ENCODE measurements at regions of chr10 and their contacts with region 1.

Region 1: DNA sequence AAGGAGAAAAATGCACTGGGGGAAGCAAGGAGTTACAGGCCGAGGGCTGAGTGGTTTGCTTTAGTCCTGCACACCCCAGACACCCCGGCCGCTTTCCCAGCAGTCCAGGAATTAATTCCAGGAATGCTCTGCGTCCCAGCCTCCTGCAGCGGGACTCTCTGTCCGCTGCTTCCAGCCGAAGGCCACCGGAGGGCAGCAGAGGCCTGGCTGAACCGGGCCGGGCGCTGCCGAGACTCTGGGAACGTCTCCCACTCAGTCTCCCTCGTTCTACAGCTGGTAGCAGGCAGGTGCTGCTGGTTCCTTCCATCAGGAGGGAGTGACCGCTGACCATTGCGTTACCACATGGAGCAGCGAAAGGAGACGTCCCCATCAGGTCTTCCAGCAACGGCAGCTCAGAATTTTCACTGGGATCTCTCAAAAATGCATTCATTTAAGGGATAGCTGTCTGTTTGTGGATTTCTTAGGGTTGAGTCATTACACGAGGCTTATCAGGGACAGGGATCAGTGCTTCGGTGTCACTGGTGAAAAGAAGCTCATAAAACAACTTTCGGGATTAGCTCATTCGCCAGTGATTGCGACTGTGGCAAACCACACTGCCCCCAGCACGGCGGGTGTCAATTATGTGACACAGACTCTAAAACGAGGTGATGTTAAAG is 24.9 kb upstream of the PITRM1 start:
- DNase-seq: peak; percentile 60 to 85
- H3K4me3 ChIP-seq: no peak overlapping the region
- H3K27ac ChIP-seq: no peak overlapping the region
- H3K4me1 ChIP-seq: no peaks in the 10 kb centered on the region; a peak in 2 of 7 replicates
- H3K27me3 ChIP-seq: peaks cover 0 to 3% (median under 1%) of the 10 kb centered on the region in 4 experiments; a peak in 1 of 7 replicates
- CTCF ChIP-seq: peak; percentile 81 to 92 (median 83)
- EP300 ChIP-seq: no peak
- POLR2A ChIP-seq: no peak
- RAD21 ChIP-seq: peak; percentile 95 to 97

Region 2: DNA sequence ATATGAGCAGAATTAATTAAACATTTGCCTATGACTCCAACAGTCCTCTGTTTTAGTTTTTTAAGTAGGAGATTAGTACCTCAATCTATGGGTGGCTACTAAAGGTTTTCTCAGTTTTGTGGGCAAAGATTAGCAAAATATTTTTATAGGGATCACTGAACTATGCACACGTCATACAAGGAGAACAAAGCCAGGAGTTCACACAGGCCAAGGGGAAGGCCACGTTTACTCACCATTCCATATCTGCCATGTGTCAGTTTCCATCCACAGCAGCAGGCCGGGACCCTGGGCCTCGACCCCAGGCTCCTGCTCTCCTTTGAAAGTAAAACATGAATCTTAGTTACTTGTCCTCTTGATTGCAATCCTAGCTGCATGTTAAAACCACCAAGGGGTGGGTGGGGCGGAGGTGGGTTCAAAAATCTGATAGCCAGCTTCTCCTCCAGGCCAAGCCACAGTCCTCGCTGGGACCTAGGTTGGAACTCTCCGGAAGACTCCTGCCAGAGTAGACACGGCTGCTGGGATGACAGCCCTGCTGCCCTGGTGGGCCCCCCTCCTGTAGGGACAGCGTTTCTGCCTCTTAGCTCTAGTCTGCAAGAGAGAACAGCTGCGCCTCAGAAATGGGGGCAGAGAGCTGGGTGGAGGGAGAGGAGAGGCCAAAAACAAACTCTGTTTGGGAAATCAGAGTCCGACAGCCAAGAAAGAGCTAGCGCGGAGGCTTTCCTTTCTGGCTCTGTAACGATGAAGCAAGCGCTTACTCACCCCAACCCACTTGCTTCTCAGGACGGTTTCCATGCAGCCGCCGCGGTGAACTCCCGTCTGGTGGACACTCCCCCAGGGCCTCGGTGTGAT is 60.5 kb before region 1 on chr10:
- CTCF ChIA-PET with region 1: no interaction called
- POLR2A ChIA-PET with region 1: no interaction called
- DNase-seq: no peak
- H3K4me3 ChIP-seq: no peak overlapping the region
- H3K27ac ChIP-seq: no peak overlapping the region
- H3K4me1 ChIP-seq: no peaks in the 10 kb centered on the region
- H3K27me3 ChIP-seq: no peaks in the 10 kb centered on the region
- CTCF ChIP-seq: no peak
- EP300 ChIP-seq: no peak
- POLR2A ChIP-seq: no peak
- RAD21 ChIP-seq: no peak

Region 3: GRCh38 chr10:3186368-3186767 is 11.1 kb before region 1 on chr10:
- CTCF ChIA-PET with region 1: interaction called, 15 read pairs
- POLR2A ChIA-PET with region 1: interaction called, 3 read pairs
- DNase-seq: no peak
- H3K4me3 ChIP-seq: no peak overlapping the region
- H3K27ac ChIP-seq: no peak overlapping the region
- H3K4me1 ChIP-seq: no peaks in the 10 kb centered on the region
- H3K27me3 ChIP-seq: no peaks in the 10 kb centered on the region
- CTCF ChIP-seq: no peak
- EP300 ChIP-seq: no peak
- POLR2A ChIP-seq: no peak
- RAD21 ChIP-seq: no peak

Region 4: DNA sequence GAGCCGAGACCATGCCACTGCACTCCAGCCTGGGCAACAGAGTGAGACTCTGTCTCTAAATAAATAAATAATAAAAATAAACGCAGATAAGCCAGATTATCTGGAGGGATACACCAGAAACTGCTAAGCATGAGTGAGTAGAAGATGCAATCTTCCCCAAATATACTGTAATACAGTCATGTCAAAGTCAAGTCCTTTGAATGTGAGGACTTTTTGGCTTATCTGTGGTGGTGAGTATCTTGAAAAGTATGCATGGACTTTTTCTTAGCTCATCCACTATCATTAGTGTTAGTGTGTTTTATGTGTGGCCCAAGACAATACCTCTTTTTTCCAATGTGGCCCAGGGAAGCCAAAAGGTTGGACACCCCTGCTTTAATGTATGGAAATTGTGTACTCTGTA is 19.8 kb after region 1 on chr10:
- CTCF ChIA-PET with region 1: interaction called, 18 read pairs
- POLR2A ChIA-PET with region 1: no interaction called
- DNase-seq: no peak
- H3K4me3 ChIP-seq: no peak overlapping the region
- H3K27ac ChIP-seq: no peak overlapping the region
- H3K4me1 ChIP-seq: no peaks in the 10 kb centered on the region
- H3K27me3 ChIP-seq: 0 out of 7 replicates have a peak, but pooled peaks cover 0 to 2% (median 0%) of the 10 kb centered on the region in 4 experiments
- CTCF ChIP-seq: no peak
- EP300 ChIP-seq: no peak
- POLR2A ChIP-seq: no peak
- RAD21 ChIP-seq: no peak

Region 5: GRCh38 chr10:4767033-4767814 is 1569.7 kb after region 1 on chr10:
- CTCF ChIA-PET with region 1: interaction called, 10 read pairs
- POLR2A ChIA-PET with region 1: no interaction called
- DNase-seq: no peak
- H3K4me3 ChIP-seq: no peak overlapping the region
- H3K27ac ChIP-seq: no peak overlapping the region
- H3K4me1 ChIP-seq: peaks cover 0 to 3% (median 0%) of the 10 kb centered on the region in 4 experiments; a peak in 1 of 7 replicates
- H3K27me3 ChIP-seq: no peaks in the 10 kb centered on the region
- CTCF ChIP-seq: peak in 2 of 3 experiments; percentile 45 to 51; a peak in 2 of 4 replicates
- EP300 ChIP-seq: no peak
- POLR2A ChIP-seq: no peak
- RAD21 ChIP-seq: peak; percentile 72 to 77

Measured in H1 (cell line).